ENCODE measurements at regions of chr1 and their contacts with region 1.

Region 1: DNA sequence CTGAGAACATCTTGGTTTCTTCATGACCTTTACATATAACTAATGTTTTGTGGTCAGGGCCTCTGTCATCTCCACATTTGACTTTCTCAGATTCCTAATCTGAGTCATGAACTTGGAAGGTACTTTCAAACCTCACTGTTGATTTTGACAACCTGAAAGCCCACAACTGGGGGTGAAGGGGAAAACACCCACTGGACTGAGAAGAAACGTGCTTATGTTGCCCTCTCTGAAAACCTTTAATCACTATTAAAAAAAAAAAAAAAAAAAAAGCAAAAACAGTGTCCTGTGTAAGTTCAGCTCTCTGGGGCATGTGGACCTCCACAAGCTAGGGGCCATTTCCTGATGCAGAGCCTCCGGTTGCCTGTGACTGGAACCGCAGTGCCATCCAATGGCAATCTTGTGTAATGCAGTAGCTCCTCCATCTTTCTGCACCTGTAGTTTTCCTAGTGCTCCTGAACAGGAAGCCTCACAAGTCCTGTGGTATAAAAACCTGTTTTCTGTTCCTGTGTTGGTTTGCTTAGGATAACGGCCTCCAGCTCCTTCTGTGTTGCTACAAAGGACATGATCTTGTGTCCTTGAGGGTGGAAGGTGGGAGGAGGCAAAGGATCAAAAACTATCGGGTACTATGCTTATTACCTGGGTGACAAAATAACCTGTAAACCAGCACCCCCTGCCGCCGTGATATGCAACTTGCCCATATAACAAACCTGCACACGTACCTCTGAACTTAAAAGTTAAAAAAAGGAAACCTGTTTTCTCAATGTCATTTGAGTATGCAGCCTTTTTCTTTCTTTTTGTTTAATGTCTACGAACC is 124.5 kb downstream of the ZNF648 start:
- DNase-seq: peak; percentile 77 to 84
- H3K4me3 ChIP-seq: peak overlapping the region in 1 of 4 experiments; percentile 24; a peak in 1 of 8 replicates
- H3K27ac ChIP-seq: no peak overlapping the region
- H3K4me1 ChIP-seq: no peaks in the 10 kb centered on the region
- H3K27me3 ChIP-seq: no peaks in the 10 kb centered on the region
- CTCF ChIP-seq: peak; percentile 77 to 92 (median 90)
- EP300 ChIP-seq: no peak
- POLR2A ChIP-seq: no peak
- RAD21 ChIP-seq: peak; percentile 96 to 98

Region 2: GRCh38 chr1:181604482-181605249 is 332.3 kb before region 1 on chr1:
- CTCF ChIA-PET with region 1: no interaction called
- POLR2A ChIA-PET with region 1: no interaction called
- DNase-seq: no peak
- H3K4me3 ChIP-seq: no peak overlapping the region
- H3K27ac ChIP-seq: no peak overlapping the region
- H3K4me1 ChIP-seq: peaks cover 3 to 13% (median 9%) of the 10 kb centered on the region in 4 experiments; a peak in 6 of 7 replicates
- H3K27me3 ChIP-seq: no peaks in the 10 kb centered on the region; a peak in 2 of 7 replicates
- CTCF ChIP-seq: no peak
- EP300 ChIP-seq: no peak
- POLR2A ChIP-seq: no peak
- RAD21 ChIP-seq: no peak

Region 3: DNA sequence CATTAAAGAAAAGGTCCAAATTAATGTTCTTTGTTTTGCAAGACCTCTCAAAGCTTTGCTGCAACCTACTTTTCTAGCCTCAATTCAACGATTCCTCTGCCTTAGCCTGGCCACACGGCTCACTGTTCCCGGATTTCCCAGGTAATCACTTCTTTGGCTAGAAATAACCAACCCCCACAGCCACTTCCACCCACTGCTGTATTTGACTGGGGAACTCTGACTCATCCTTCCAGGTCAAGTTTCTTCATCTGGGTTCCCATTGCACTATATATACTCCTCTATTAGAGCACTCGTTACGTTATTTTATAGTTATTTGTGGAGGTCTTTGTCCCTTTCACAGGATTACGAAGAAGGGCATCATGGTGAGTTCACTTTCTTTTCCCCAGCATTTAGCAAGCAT is 267.7 kb before region 1 on chr1:
- CTCF ChIA-PET with region 1: interaction called, 11 read pairs
- POLR2A ChIA-PET with region 1: no interaction called
- DNase-seq: no peak
- H3K4me3 ChIP-seq: no peak overlapping the region
- H3K27ac ChIP-seq: no peak overlapping the region
- H3K4me1 ChIP-seq: no peaks in the 10 kb centered on the region
- H3K27me3 ChIP-seq: no peaks in the 10 kb centered on the region
- CTCF ChIP-seq: no peak
- EP300 ChIP-seq: no peak
- POLR2A ChIP-seq: no peak
- RAD21 ChIP-seq: no peak

Region 4: DNA sequence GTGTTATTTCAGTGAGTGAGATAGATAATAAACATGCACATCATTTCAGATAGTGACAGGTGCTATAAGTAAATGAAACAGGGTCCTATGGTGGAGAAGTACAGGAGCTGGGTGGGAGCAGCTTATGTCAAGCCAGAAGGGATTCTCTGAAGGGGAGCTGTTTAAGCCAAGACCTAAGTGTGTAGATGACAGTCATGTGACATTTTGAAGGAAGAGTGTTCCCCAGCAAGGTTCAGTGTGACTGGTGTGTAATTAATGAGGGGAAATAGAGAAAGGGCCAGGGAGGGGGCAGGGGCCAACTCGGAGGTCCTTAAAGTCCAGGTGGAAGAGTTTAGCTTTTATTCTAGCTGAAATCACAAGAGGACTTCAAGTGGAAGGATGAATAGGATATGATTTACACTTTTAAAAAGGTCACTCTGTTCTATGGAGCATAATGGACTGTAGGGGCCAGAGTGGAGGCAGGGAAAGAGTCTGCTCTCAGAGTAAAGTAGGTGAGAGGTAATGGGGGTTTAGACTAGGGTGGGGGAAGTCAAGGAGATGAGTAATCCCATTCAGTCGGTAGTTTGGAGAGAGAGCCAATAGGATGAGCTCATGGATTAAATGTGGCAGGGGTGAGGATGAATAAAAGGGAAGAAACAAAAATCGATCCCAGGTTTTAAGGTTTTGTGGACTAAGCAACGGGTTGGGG is 210.5 kb before region 1 on chr1:
- CTCF ChIA-PET with region 1: interaction called, 12 read pairs
- POLR2A ChIA-PET with region 1: no interaction called
- DNase-seq: no peak
- H3K4me3 ChIP-seq: no peak overlapping the region
- H3K27ac ChIP-seq: no peak overlapping the region
- H3K4me1 ChIP-seq: no peaks in the 10 kb centered on the region; a peak in 1 of 7 replicates
- H3K27me3 ChIP-seq: no peaks in the 10 kb centered on the region
- CTCF ChIP-seq: no peak
- EP300 ChIP-seq: no peak
- POLR2A ChIP-seq: no peak
- RAD21 ChIP-seq: no peak

Region 5: DNA sequence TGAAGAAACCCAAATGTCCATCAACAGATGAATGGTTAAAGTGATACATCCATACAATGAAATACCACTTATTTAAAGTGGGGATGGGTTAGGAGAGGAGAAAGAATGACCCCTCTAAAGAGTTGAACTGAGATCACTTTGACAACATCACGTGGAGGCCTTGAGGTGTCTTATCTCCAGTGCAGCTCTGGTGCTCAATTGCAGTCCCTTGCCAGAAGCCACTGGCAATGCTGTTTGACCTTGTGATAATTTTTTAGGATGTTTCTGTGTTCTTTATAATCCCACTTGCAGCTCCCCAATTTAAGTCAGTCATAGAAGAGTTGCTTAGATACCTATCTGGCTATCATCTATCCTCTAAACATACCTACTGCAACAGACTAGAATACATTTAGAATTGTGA is 43.0 kb before region 1 on chr1:
- CTCF ChIA-PET with region 1: no interaction called
- POLR2A ChIA-PET with region 1: no interaction called
- DNase-seq: no peak
- H3K4me3 ChIP-seq: no peak overlapping the region
- H3K27ac ChIP-seq: no peak overlapping the region
- H3K4me1 ChIP-seq: no peaks in the 10 kb centered on the region
- H3K27me3 ChIP-seq: no peaks in the 10 kb centered on the region
- CTCF ChIP-seq: no peak
- EP300 ChIP-seq: no peak
- POLR2A ChIP-seq: no peak
- RAD21 ChIP-seq: no peak

Region 6: DNA sequence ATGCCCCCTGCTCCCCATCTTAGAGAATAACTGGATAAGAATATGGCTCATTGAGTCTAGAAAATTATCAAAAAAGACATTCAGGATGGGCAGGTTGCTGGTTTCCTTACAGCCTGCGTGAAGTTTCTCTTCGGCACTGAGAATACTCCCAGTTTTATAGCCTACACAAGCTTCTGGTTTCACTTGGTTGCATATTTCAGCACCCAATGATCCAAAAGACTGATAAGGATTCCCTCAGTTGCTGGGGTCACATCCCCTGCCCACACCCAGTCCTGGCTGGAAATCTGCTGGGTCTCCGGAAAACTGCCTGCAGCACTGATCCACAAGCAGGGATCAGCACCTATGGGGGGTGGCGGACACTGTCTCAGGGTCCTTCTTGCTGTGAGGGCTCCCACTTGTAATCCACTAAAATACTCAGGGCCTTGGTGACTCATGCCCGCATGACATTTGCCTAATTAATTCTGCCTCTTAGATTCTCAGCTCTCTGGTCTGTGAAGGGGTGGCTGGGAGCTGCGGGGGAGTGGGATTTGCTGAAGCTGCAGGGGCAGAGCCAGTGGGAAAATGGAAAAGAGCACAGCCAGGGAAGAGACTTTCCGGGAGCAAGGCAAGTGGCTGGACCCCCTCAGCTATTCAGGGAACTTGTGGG is 18.0 kb before region 1 on chr1:
- CTCF ChIA-PET with region 1: interaction called, 54 read pairs
- POLR2A ChIA-PET with region 1: no interaction called
- DNase-seq: peak in 1 of 2 experiments; percentile 49
- H3K4me3 ChIP-seq: no peak overlapping the region
- H3K27ac ChIP-seq: no peak overlapping the region
- H3K4me1 ChIP-seq: peaks cover 0 to 3% (median 1%) of the 10 kb centered on the region in 4 experiments; a peak in 4 of 7 replicates
- H3K27me3 ChIP-seq: no peaks in the 10 kb centered on the region
- CTCF ChIP-seq: no peak
- EP300 ChIP-seq: no peak
- POLR2A ChIP-seq: no peak
- RAD21 ChIP-seq: no peak

Region 7: GRCh38 chr1:182015360-182015759 is 78.4 kb after region 1 on chr1:
- CTCF ChIA-PET with region 1: interaction called, 10 read pairs
- POLR2A ChIA-PET with region 1: no interaction called
- DNase-seq: no peak
- H3K4me3 ChIP-seq: no peak overlapping the region
- H3K27ac ChIP-seq: no peak overlapping the region
- H3K4me1 ChIP-seq: no peaks in the 10 kb centered on the region
- H3K27me3 ChIP-seq: no peaks in the 10 kb centered on the region
- CTCF ChIP-seq: peak in 2 of 3 experiments; percentile 24 to 52; a peak in 2 of 4 replicates
- EP300 ChIP-seq: no peak
- POLR2A ChIP-seq: no peak
- RAD21 ChIP-seq: peak; percentile 41 to 58